CD8-positive, alpha-beta T cell (primary cell): ENCODE measurements at regions of chr17 and their contacts with region 1.

Region 1: DNA sequence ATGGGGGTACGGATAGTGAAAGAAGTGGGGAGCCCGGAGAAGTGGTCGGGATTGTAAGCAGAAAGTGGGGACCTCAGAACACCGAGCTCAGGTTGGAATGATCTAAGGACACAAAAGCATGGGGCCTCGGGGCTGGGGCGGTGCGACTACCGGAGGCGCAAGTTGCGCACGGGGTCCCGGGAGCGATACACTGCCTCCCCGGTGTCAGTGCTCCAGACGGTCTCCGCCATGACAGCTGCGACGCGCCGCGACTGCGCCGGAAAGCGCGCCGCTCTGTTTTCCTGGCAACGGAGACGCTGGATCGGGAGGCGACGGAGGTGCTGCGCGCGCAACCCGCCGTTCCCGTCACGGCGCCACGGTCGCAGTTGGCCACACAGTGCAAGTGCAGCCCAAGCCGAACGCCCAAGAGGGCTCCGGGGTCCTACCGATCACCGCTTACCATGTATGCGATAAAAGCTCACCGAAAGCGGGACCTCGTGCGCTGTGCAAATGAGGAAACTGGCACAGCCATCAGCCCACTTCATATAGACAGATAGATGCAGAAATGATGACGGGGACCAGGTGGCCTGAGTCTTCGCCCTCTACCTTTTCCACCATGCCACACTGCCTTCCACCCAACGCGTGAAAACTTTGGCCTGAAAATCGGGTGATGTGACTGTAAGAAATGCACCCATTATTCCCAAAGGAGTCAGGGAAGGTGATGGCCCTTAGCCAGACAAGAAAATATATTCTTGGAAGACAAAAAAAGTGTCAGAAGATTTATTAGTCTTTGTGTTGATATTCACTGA is at the start of gene MKS1:
- DNase-seq: peak; percentile 92 to 97 (median 95)
- ATAC-seq: peak; percentile 97
- H3K4me3 ChIP-seq: peak within 1 kb of the TSS; percentile 63 to 91
- H3K4me3 Mint-ChIP-seq: peak within 1 kb of the TSS; percentile 87
- H3K27ac ChIP-seq: peak within 1 kb of the TSS; percentile 82 to 90
- H3K27ac Mint-ChIP-seq: peak within 1 kb of the TSS; percentile 93
- H3K4me1 ChIP-seq: peaks cover 14% of the 10 kb centered on the region
- H3K4me1 Mint-ChIP-seq: peaks cover 23% of the 10 kb centered on the region
- H3K27me3 ChIP-seq: no peaks in the 10 kb centered on the region
- H3K27me3 Mint-ChIP-seq: peaks cover 2% of the 10 kb centered on the region
- CTCF ChIP-seq: peak; percentile 67
- total RNA-seq, gene MKS1: 4.6 to 4.9 TPM

Region 2: DNA sequence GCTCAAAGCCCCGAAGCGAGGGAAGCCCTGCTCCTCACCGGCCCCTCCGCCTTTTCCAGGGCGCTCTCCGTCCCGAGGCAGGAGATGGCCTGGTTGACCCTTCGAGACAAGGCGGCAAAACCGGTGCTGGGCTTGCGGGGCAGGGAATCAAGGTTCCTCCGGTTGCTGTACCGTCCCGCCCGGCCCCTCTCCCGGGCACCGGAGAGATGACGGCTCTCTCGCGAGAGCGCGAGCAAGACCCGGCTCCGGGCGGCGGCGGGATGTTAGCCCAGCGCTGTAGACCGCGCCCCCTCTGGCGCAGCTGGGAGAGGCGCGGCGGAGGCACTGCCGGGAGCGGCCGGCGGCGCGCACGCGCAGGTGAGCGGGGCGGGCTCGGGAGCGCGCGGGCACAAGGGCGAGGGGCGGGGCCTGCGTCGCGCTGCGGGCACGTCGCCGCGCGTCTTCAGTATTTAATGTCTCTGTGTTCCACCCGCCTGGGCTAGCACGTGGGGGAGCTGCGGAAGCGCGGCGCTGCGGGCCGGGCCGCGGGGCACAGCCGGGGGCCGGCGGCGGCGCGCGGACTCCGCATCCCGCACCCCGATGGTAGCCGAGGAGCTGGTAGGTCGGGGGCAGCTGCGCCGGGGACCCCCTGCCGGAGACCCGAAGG is 1134.3 kb before region 1 on chr17 and contains the start of gene AKAP1:
- CTCF ChIA-PET with region 1: no interaction called
- POLR2A ChIA-PET with region 1: no interaction called
- intact Hi-C with region 1: loop called in 1 of 2 experiments (anchors 2 kb)
- DNase-seq: peak; percentile 89 to 98 (median 94)
- ATAC-seq: peak; percentile 86
- H3K4me3 ChIP-seq: peak within 1 kb of the TSS; percentile 88 to 95
- H3K4me3 Mint-ChIP-seq: peak within 1 kb of the TSS; percentile 91
- H3K27ac ChIP-seq: peak within 1 kb of the TSS; percentile 87 to 93
- H3K27ac Mint-ChIP-seq: peak within 1 kb of the TSS; percentile 93
- H3K4me1 ChIP-seq: peaks cover 12% of the 10 kb centered on the region
- H3K4me1 Mint-ChIP-seq: peaks cover 38% of the 10 kb centered on the region
- H3K27me3 ChIP-seq: no peaks in the 10 kb centered on the region
- H3K27me3 Mint-ChIP-seq: no peaks in the 10 kb centered on the region
- CTCF ChIP-seq: no peak
- total RNA-seq, gene AKAP1: 20.6 to 23.5 TPM

Region 3: GRCh38 chr17:57987580-57988421 is 231.4 kb before region 1 on chr17 and contains the start of gene VEZF1:
- CTCF ChIA-PET with region 1: no interaction called
- POLR2A ChIA-PET with region 1: no interaction called
- intact Hi-C with region 1: loop called in 1 of 2 experiments (anchors 5 kb)
- DNase-seq: peak; percentile 53 to 91 (median 79)
- ATAC-seq: peak; percentile 67
- H3K4me3 ChIP-seq: peak within 1 kb of the TSS; percentile 83 to 90
- H3K4me3 Mint-ChIP-seq: peak within 1 kb of the TSS; percentile 94
- H3K27ac ChIP-seq: peak within 1 kb of the TSS; percentile 57 to 72
- H3K27ac Mint-ChIP-seq: peak within 1 kb of the TSS; percentile 93
- H3K4me1 ChIP-seq: peaks cover 49% of the 10 kb centered on the region
- H3K4me1 Mint-ChIP-seq: peaks cover 63% of the 10 kb centered on the region
- H3K27me3 ChIP-seq: no peaks in the 10 kb centered on the region
- H3K27me3 Mint-ChIP-seq: no peaks in the 10 kb centered on the region
- CTCF ChIP-seq: no peak
- total RNA-seq, gene VEZF1: 45.2 to 46.6 TPM

Region 4: GRCh38 chr17:58136669-58137283 is 82.4 kb before region 1 on chr17:
- CTCF ChIA-PET with region 1: no interaction called
- POLR2A ChIA-PET with region 1: no interaction called
- intact Hi-C with region 1: no loop called
- DNase-seq: no peak
- ATAC-seq: no peak
- H3K4me3 ChIP-seq: no peak overlapping the region
- H3K4me3 Mint-ChIP-seq: no peak overlapping the region
- H3K27ac ChIP-seq: no peak overlapping the region
- H3K27ac Mint-ChIP-seq: no peak overlapping the region
- H3K4me1 ChIP-seq: no peaks in the 10 kb centered on the region
- H3K4me1 Mint-ChIP-seq: peaks cover 5% of the 10 kb centered on the region
- H3K27me3 ChIP-seq: no peaks in the 10 kb centered on the region
- H3K27me3 Mint-ChIP-seq: no peaks in the 10 kb centered on the region
- CTCF ChIP-seq: no peak

Region 5: GRCh38 chr17:58156839-58157803 is 62.1 kb before region 1 on chr17:
- CTCF ChIA-PET with region 1: no interaction called
- POLR2A ChIA-PET with region 1: no interaction called
- intact Hi-C with region 1: loop called in 1 of 2 experiments (anchors 5 kb)
- DNase-seq: peak; percentile 19 to 81 (median 56)
- ATAC-seq: peak; percentile 54
- H3K4me3 ChIP-seq: peak overlapping the region; percentile 73 to 79
- H3K4me3 Mint-ChIP-seq: peak overlapping the region; percentile 85
- H3K27ac ChIP-seq: peak overlapping the region; percentile 84 to 92
- H3K27ac Mint-ChIP-seq: peak overlapping the region; percentile 87
- H3K4me1 ChIP-seq: peaks cover 60% of the 10 kb centered on the region
- H3K4me1 Mint-ChIP-seq: peaks cover 69% of the 10 kb centered on the region
- H3K27me3 ChIP-seq: no peaks in the 10 kb centered on the region
- H3K27me3 Mint-ChIP-seq: no peaks in the 10 kb centered on the region
- CTCF ChIP-seq: no peak

Region 6: GRCh38 chr17:58189436-58190146 is 29.6 kb before region 1 on chr17:
- CTCF ChIA-PET with region 1: no interaction called
- POLR2A ChIA-PET with region 1: no interaction called
- intact Hi-C with region 1: no loop called
- DNase-seq: no peak
- ATAC-seq: no peak
- H3K4me3 ChIP-seq: no peak overlapping the region
- H3K4me3 Mint-ChIP-seq: no peak overlapping the region
- H3K27ac ChIP-seq: no peak overlapping the region
- H3K27ac Mint-ChIP-seq: no peak overlapping the region
- H3K4me1 ChIP-seq: no peaks in the 10 kb centered on the region
- H3K4me1 Mint-ChIP-seq: no peaks in the 10 kb centered on the region
- H3K27me3 ChIP-seq: no peaks in the 10 kb centered on the region
- H3K27me3 Mint-ChIP-seq: peaks cover 16% of the 10 kb centered on the region
- CTCF ChIP-seq: no peak

Region 7: GRCh38 chr17:58352014-58352842 is 133.0 kb after region 1 on chr17 and contains the start of gene SUPT4H1:
- CTCF ChIA-PET with region 1: no interaction called
- POLR2A ChIA-PET with region 1: no interaction called
- intact Hi-C with region 1: loop called (anchors 1 to 5 kb)
- DNase-seq: peak; percentile 81 to 97 (median 91)
- ATAC-seq: peak; percentile 88
- H3K4me3 ChIP-seq: peak within 1 kb of the TSS; percentile 69 to 70
- H3K4me3 Mint-ChIP-seq: peak within 1 kb of the TSS; percentile 100
- H3K27ac ChIP-seq: peak within 1 kb of the TSS; percentile 75 to 81
- H3K27ac Mint-ChIP-seq: peak within 1 kb of the TSS; percentile 100
- H3K4me1 ChIP-seq: peaks cover 46% of the 10 kb centered on the region
- H3K4me1 Mint-ChIP-seq: peaks cover 60% of the 10 kb centered on the region
- H3K27me3 ChIP-seq: no peaks in the 10 kb centered on the region
- H3K27me3 Mint-ChIP-seq: no peaks in the 10 kb centered on the region
- CTCF ChIP-seq: no peak
- total RNA-seq, gene SUPT4H1: 45.2 to 59.7 TPM

Region 8: GRCh38 chr17:59004338-59005111 is 785.3 kb after region 1 on chr17:
- CTCF ChIA-PET with region 1: no interaction called
- POLR2A ChIA-PET with region 1: no interaction called
- intact Hi-C with region 1: loop called in 1 of 2 experiments (anchors 5 kb)
- DNase-seq: peak; percentile 52 to 82 (median 74)
- ATAC-seq: peak; percentile 54
- H3K4me3 ChIP-seq: no peak overlapping the region
- H3K4me3 Mint-ChIP-seq: no peak overlapping the region
- H3K27ac ChIP-seq: peak overlapping the region in 1 of 2 experiments; percentile 40
- H3K27ac Mint-ChIP-seq: peak overlapping the region; percentile 60
- H3K4me1 ChIP-seq: peaks cover 15% of the 10 kb centered on the region
- H3K4me1 Mint-ChIP-seq: peaks cover 13% of the 10 kb centered on the region
- H3K27me3 ChIP-seq: no peaks in the 10 kb centered on the region
- H3K27me3 Mint-ChIP-seq: no peaks in the 10 kb centered on the region
- CTCF ChIP-seq: peak; percentile 98